A673 (cell line): ENCODE measurements at regions of chr11 and their contacts with region 1.

Region 1: GRCh38 chr11:86818466-86819192 is 18.3 kb downstream of the PRSS23 start:
- DNase-seq: peak; percentile 89
- H3K4me3 ChIP-seq: no peak overlapping the region
- H3K27ac ChIP-seq: no peak overlapping the region
- H3K4me1 ChIP-seq: peaks cover 26% of the 10 kb centered on the region
- H3K27me3 ChIP-seq: no peaks in the 10 kb centered on the region
- CTCF ChIP-seq: peak; percentile 86

Region 2: GRCh38 chr11:85941380-85941973 is 877.2 kb before region 1 on chr11:
- CTCF ChIA-PET with region 1: no interaction called
- POLR2A ChIA-PET with region 1: no interaction called
- intact Hi-C with region 1: loop called (anchors 2 kb)
- DNase-seq: peak; percentile 82
- H3K4me3 ChIP-seq: no peak overlapping the region
- H3K27ac ChIP-seq: no peak overlapping the region
- H3K4me1 ChIP-seq: no peaks in the 10 kb centered on the region
- H3K27me3 ChIP-seq: no peaks in the 10 kb centered on the region
- CTCF ChIP-seq: peak; percentile 84

Region 3: GRCh38 chr11:86456052-86456939 is 362.3 kb before region 1 on chr11:
- CTCF ChIA-PET with region 1: no interaction called
- POLR2A ChIA-PET with region 1: no interaction called
- intact Hi-C with region 1: loop called (anchors 1 kb)
- DNase-seq: peak; percentile 92
- H3K4me3 ChIP-seq: no peak overlapping the region
- H3K27ac ChIP-seq: no peak overlapping the region
- H3K4me1 ChIP-seq: peaks cover 8% of the 10 kb centered on the region
- H3K27me3 ChIP-seq: no peaks in the 10 kb centered on the region
- CTCF ChIP-seq: peak; percentile 97

Region 4: GRCh38 chr11:86632499-86633269 is 185.9 kb before region 1 on chr11:
- CTCF ChIA-PET with region 1: no interaction called
- POLR2A ChIA-PET with region 1: no interaction called
- intact Hi-C with region 1: loop called (anchors 1 kb)
- DNase-seq: peak; percentile 83
- H3K4me3 ChIP-seq: no peak overlapping the region
- H3K27ac ChIP-seq: no peak overlapping the region
- H3K4me1 ChIP-seq: peaks cover 3% of the 10 kb centered on the region
- H3K27me3 ChIP-seq: no peaks in the 10 kb centered on the region
- CTCF ChIP-seq: peak; percentile 59

Region 5: GRCh38 chr11:86919557-86920210 is 101.1 kb after region 1 on chr11:
- CTCF ChIA-PET with region 1: no interaction called
- POLR2A ChIA-PET with region 1: no interaction called
- intact Hi-C with region 1: loop called (anchors 5 kb)
- DNase-seq: peak; percentile 90
- H3K4me3 ChIP-seq: no peak overlapping the region
- H3K27ac ChIP-seq: peak overlapping the region; percentile 87
- H3K4me1 ChIP-seq: peaks cover 63% of the 10 kb centered on the region
- H3K27me3 ChIP-seq: no peaks in the 10 kb centered on the region
- CTCF ChIP-seq: peak; percentile 88

Region 6: DNA sequence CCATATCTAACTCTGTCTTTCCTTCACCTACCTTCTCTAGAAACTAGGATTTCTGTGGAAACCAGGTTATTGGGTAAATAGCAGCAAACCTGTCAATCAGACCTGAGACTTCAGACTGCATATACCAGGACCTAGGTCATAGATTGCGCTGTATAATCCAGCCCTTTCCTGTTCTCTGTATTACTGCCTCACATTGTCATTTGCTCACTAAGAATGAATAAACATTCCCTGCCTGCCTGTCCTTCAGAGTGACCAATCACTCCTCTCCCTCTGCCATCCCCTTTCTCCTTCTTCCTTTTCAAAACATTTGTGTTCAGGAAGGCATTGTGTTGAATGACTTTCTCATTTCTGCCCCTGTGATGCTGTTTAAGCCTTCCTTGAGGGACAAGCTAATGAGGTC is 150.6 kb after region 1 on chr11:
- CTCF ChIA-PET with region 1: no interaction called
- POLR2A ChIA-PET with region 1: no interaction called
- intact Hi-C with region 1: no loop called
- DNase-seq: no peak
- H3K4me3 ChIP-seq: no peak overlapping the region
- H3K27ac ChIP-seq: no peak overlapping the region
- H3K4me1 ChIP-seq: no peaks in the 10 kb centered on the region
- H3K27me3 ChIP-seq: no peaks in the 10 kb centered on the region
- CTCF ChIP-seq: no peak

Region 7: DNA sequence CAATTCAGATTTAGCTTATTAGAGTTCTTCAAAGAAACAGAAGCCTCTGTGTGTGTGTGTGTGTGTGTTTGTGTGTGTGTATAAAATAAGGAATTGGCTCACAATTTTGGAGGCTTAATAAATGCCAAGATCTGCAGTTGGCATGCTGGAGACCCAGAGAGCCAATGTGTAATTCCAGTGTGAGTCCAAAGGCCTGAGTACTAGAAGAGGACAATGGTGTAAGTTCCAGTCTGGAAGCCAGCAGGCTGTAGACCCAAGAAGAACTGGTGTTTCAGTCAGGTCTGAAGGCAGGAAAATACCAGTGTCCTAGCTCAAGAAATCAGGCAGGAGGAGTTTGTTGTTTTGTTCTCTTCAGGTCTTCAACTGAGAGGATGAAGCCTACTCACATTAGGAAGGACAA is 239.1 kb after region 1 on chr11:
- CTCF ChIA-PET with region 1: no interaction called
- POLR2A ChIA-PET with region 1: no interaction called
- intact Hi-C with region 1: no loop called
- DNase-seq: no peak
- H3K4me3 ChIP-seq: no peak overlapping the region
- H3K27ac ChIP-seq: no peak overlapping the region
- H3K4me1 ChIP-seq: peaks cover 5% of the 10 kb centered on the region
- H3K27me3 ChIP-seq: no peaks in the 10 kb centered on the region
- CTCF ChIP-seq: no peak